K562 (cell line): ENCODE measurements at regions of chr19 and their contacts with region 1.

Region 1: GRCh38 chr19:35648017-35648961 is at the start of gene COX6B1:
- DNase-seq: peak; percentile 89 to 99 (median 92)
- ATAC-seq: peak; percentile 79
- H3K4me3 ChIP-seq: peak within 1 kb of the TSS; percentile 94
- H3K27ac ChIP-seq: peak within 1 kb of the TSS; percentile 93
- H3K4me1 ChIP-seq: peaks cover 14 to 40% of the 10 kb centered on the region in 2 experiments; a peak in 4 of 5 replicates
- H3K27me3 ChIP-seq: no peaks in the 10 kb centered on the region
- CTCF ChIP-seq: no peak; a peak in 1 of 6 replicates
- EP300 ChIP-seq: peak; percentile 0; the same call in 1 of the 2 replicates
- POLR2A ChIP-seq: peak; percentile 95
- RAD21 ChIP-seq: no peak
- polyA plus RNA-seq, gene COX6B1: 2,325 to 2,393 TPM

Region 2: DNA sequence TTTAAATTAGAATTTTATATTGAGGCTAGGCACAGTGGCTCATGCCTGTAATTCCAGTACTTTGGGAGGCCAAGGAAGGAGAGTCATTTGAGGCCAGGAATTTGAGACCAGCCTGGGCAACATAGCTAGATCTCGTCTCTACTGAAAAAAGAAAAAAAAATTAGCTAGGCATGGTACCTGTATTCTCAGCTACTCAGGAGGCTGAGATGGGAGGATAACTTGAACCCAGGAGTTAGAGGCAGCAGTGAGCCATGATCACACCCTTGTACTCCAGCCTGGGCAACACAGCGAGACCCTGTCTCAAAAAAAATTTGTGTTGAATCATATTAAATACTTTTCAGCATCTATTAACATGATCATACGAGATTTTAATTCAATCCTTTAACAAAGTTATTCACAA is 57.4 kb before region 1 on chr19:
- CTCF ChIA-PET with region 1: no interaction called
- POLR2A ChIA-PET with region 1: no interaction called
- in situ Hi-C with region 1: no loop called
- intact Hi-C with region 1: no loop called
- DNase-seq: no peak
- ATAC-seq: no peak
- H3K4me3 ChIP-seq: no peak overlapping the region
- H3K27ac ChIP-seq: no peak overlapping the region
- H3K4me1 ChIP-seq: peaks cover 0 to 4% of the 10 kb centered on the region in 2 experiments; a peak in 2 of 5 replicates
- H3K27me3 ChIP-seq: peaks cover 0 to 6% of the 10 kb centered on the region in 2 experiments; a peak in 3 of 5 replicates
- CTCF ChIP-seq: no peak
- EP300 ChIP-seq: no peak
- POLR2A ChIP-seq: no peak
- RAD21 ChIP-seq: no peak

Region 3: DNA sequence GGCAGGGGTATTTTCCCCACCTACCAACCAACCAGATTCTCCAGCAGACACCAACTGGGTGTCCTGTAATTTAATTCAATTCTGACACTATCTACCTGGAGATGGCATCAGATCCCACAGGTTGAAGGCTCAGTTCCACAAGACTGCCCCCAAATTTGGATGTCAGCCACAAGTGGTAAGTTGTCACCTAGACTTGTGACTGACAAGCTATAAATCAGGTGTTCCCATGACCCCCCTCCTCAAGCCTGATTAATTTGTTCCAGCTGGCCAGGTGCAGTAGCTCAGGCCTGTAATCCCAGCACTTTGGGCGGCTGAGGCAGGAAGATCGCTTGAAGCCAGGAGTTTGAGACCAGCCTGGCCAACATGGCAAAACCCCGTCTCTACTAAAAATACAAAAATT is 46.3 kb before region 1 on chr19:
- CTCF ChIA-PET with region 1: no interaction called
- POLR2A ChIA-PET with region 1: no interaction called
- in situ Hi-C with region 1: no loop called
- intact Hi-C with region 1: no loop called
- DNase-seq: no peak
- ATAC-seq: no peak
- H3K4me3 ChIP-seq: no peak overlapping the region
- H3K27ac ChIP-seq: no peak overlapping the region
- H3K4me1 ChIP-seq: no peaks in the 10 kb centered on the region; a peak in 1 of 5 replicates
- H3K27me3 ChIP-seq: peaks cover 12 to 28% of the 10 kb centered on the region in 2 experiments
- CTCF ChIP-seq: no peak
- EP300 ChIP-seq: no peak
- POLR2A ChIP-seq: no peak
- RAD21 ChIP-seq: no peak

Region 4: GRCh38 chr19:35637165-35637564 is 11.1 kb before region 1 on chr19:
- CTCF ChIA-PET with region 1: no interaction called
- POLR2A ChIA-PET with region 1: interaction called, 13 read pairs
- in situ Hi-C with region 1: no loop called
- intact Hi-C with region 1: no loop called
- DNase-seq: no peak
- ATAC-seq: no peak
- H3K4me3 ChIP-seq: no peak overlapping the region
- H3K27ac ChIP-seq: no peak overlapping the region
- H3K4me1 ChIP-seq: peaks cover 11 to 21% of the 10 kb centered on the region in 2 experiments; a peak in 4 of 5 replicates
- H3K27me3 ChIP-seq: no peaks in the 10 kb centered on the region
- CTCF ChIP-seq: no peak
- EP300 ChIP-seq: no peak
- POLR2A ChIP-seq: no peak
- RAD21 ChIP-seq: no peak

Region 5: GRCh38 chr19:35689666-35690225 is 41.5 kb after region 1 on chr19:
- CTCF ChIA-PET with region 1: no interaction called
- POLR2A ChIA-PET with region 1: no interaction called
- in situ Hi-C with region 1: no loop called
- intact Hi-C with region 1: no loop called
- DNase-seq: no peak
- ATAC-seq: no peak
- H3K4me3 ChIP-seq: no peak overlapping the region
- H3K27ac ChIP-seq: no peak overlapping the region
- H3K4me1 ChIP-seq: no peaks in the 10 kb centered on the region; a peak in 1 of 5 replicates
- H3K27me3 ChIP-seq: no peaks in the 10 kb centered on the region
- CTCF ChIP-seq: no peak
- EP300 ChIP-seq: no peak
- POLR2A ChIP-seq: no peak
- RAD21 ChIP-seq: no peak

Region 6: GRCh38 chr19:35740423-35741202 is 92.3 kb after region 1 on chr19:
- CTCF ChIA-PET with region 1: no interaction called
- POLR2A ChIA-PET with region 1: interaction called, 4 read pairs
- in situ Hi-C with region 1: no loop called
- intact Hi-C with region 1: loop called (anchors 10 kb)
- DNase-seq: peak; percentile 92 to 99 (median 96)
- ATAC-seq: peak; percentile 90
- H3K4me3 ChIP-seq: peak overlapping the region; percentile 65
- H3K27ac ChIP-seq: peak overlapping the region; percentile 85
- H3K4me1 ChIP-seq: peaks cover 24 to 53% of the 10 kb centered on the region in 2 experiments; a peak in 4 of 5 replicates
- H3K27me3 ChIP-seq: no peaks in the 10 kb centered on the region
- CTCF ChIP-seq: peak; percentile 46 to 61 (median 53); a peak in 5 of 6 replicates
- EP300 ChIP-seq: no peak
- POLR2A ChIP-seq: peak; percentile 87
- RAD21 ChIP-seq: peak in 1 of 2 experiments; percentile 25; a peak in 1 of 4 replicates